Body of pancreas (tissue), 4 donors: ENCODE measurements at regions of chr2 and their contacts with region 1.

Region 1: GRCh38 chr2:44226753-44227152 is 48.5 kb upstream of the SLC3A1 start:
- DNase-seq: no peak
- ATAC-seq: no peak
- H3K4me3 ChIP-seq: no peak overlapping the region
- H3K27ac ChIP-seq: no peak overlapping the region
- H3K4me1 ChIP-seq: peaks cover 14% of the 10 kb centered on the region
- H3K27me3 ChIP-seq: no peaks in the 10 kb centered on the region
- CTCF ChIP-seq: no peak
- POLR2A ChIP-seq: no peak

Region 2: DNA sequence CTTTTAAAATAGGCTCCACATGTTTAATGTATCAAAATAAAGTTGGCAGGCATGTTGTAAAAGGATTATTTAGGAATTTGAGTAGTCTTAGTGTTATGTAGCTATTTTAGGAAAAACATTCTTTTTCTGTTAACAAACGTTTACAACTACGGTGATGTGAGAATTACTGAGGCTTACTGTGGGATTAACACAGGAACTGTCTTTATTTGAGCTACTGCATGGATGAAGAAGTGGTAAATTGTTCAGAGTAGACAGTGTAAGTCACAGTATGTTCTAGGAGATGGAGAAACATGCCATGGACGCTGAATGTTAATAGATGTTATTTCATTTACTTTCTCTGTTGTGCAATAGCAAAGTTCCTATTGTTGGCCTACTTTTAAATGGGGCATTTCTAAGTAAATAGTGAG is 56.4 kb before region 1 on chr2:
- intact Hi-C with region 1: loop called (anchors 10 kb)
- DNase-seq: peak in 1 of 4 donors; percentile 13
- ATAC-seq: no peak
- H3K4me3 ChIP-seq: peak overlapping the region in 1 of 2 donors; percentile 80
- H3K27ac ChIP-seq: peak overlapping the region; percentile 51 to 99 (median 98)
- H3K4me1 ChIP-seq: peaks cover 25% of the 10 kb centered on the region
- H3K27me3 ChIP-seq: no peaks in the 10 kb centered on the region
- CTCF ChIP-seq: no peak
- POLR2A ChIP-seq: peak in 2 of 3 donors; percentile 39 to 50